ENCODE measurements at regions of chr19 and their contacts with region 1.

Region 1: DNA sequence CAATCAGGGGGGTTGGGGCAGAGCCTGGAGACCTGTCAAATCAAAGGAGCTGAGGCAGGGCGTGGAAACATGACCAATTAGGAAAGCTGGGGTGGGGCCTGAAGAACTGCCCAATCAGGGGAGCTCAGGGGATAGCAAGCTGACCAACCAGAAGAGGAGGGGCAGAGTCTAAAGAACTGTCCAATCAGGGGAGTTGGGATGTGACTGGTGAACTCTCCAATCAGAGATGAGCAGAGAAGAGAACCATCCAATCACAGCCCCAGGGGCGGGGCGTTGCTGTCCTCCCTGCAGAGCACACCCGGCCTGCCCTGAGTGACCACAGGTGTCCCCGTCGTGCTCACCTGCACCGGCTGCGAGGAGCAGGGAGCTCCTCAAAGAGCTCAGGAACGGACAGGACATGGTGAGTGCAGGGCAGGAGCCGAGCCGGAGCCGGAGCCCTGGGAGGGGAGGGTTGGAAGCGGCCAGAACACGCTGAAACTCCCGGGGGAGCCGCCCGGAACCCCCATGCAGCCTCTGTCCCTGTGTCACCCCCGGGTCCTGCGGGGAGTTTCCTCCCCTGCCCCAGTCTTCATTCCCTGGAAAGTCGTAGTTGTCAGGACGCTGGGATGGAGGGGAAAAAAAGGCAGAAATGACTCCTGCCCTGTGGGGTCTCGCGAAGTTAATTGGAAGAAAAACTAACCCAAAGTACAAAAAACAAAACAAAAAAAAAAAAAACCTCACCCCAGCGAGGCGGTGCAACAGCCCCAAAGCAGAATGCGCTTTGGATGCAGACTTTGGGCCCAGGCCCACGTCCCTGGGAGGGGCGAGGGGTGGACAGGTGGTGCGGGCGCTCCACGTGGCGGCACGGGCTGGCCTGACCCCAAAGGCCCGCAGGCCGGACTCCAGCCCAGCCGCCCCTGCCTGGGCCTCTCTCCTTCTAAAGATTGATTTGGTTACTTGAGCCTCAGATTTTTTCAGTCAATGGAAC is at the start of gene ZNF556:
- DNase-seq: peak; percentile 12
- H3K4me3 ChIP-seq: no peak within 1 kb of the TSS
- H3K27ac ChIP-seq: no peak within 1 kb of the TSS
- H3K4me1 ChIP-seq: no peaks in the 10 kb centered on the region
- H3K27me3 ChIP-seq: no peaks in the 10 kb centered on the region
- total RNA-seq, gene ZNF556: not detected in 2 replicates

Region 2: DNA sequence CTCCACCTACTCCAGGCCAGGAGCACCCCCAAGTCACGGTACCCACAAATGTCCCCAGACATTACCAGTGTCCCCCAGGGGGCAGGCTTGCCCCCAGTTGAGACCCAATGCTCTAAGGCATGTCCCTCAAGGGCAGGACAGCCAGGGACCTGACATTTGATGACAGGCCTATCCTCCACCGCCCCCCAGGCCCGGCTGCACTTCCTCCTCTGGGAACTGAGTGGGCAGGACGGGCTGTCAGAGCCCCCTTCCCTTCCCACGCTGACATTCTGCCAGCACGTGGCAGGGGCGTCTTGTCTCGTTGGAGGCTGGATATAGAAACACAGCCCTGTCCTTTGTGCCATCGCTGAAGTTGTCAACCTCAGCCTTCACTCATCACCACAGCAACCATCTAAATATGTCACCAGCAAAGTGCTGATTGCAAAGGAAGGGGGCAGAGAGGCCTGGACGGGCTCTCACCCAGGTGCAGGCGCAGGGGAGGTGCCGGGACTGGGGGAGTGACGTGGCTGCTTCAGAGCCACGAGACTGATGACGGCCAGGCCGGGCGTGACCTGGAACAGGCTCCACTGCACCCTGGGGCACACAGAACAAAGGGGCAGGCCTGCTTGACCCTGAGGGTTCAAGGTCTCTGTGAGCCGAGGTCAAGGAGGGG is 203.3 kb before region 1 on chr19:
- in situ Hi-C with region 1: loop called (anchors 25 kb)
- DNase-seq: no peak
- H3K4me3 ChIP-seq: no peak overlapping the region
- H3K27ac ChIP-seq: no peak overlapping the region
- H3K4me1 ChIP-seq: no peaks in the 10 kb centered on the region
- H3K27me3 ChIP-seq: no peaks in the 10 kb centered on the region; the same call in none of the 2 replicates

Region 3: DNA sequence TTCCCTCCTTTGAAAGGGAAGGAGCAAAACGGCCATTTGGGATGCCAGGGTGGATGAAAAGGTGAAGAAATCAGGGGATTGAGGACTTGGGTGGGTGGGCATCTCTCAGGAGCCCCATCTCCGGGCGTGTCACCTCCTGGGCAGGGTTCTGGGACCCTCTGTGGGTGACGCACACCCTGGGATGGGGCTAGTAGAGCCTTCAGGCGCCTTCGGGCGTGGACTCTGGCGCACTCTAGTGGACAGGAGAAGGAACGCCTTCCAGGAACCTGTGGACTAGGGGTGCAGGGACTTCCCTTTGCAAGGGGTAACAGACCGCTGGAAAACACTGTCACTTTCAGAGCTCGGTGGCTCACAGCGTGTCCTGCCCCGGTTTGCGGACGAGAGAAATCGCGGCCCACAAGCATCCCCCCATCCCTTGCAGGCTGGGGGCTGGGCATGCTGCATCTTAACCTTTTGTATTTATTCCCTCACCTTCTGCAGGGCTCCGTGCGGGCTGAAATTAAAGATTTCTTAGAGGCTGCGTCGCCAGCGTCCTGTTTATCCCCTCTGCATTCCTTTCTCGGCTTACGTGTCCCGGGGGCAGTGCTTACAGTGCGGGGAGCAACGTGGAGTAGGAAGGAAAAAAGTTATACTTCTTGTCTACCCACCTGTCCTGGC is 296.1 kb after region 1 on chr19:
- in situ Hi-C with region 1: no loop called
- DNase-seq: peak; percentile 74
- H3K4me3 ChIP-seq: no peak overlapping the region
- H3K27ac ChIP-seq: no peak overlapping the region
- H3K4me1 ChIP-seq: no peaks in the 10 kb centered on the region
- H3K27me3 ChIP-seq: no peaks in the 10 kb centered on the region

Measured in GM23248 (cell line).